ENCODE measurements at regions of chr16 and their contacts with region 1.

Region 1: DNA sequence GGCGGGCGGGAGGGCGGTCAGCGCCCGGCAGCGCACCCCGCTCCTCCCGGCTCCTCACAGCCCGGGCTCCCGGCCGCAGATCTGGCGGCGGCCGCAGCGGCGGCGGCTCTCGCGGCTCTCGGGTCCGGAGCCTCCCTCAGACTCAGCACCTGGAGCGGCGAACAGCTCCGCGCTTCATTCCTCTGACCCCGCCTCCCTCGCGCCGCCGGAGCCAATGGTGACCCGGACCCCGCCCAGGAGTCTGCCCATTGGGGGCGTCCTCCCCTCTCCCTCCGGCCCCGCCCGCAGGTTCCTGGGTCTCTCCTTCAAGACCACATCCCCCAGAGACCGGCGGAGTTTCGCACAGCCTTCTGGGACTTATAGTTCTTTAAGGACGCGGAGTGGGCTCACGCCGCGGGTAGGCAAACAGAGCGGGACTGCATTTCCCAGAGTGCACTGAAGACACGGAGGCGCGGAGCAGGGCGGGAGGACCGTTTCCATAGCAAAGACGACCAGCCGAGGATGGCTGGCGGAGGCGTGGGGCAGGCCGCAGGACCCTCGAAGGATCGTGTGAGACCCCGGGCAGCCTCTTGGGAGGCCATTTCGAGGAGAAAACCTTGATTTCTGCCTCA is at the start of gene SMPD3:
- DNase-seq: peak; percentile 86 to 93
- H3K4me3 ChIP-seq: peak within 1 kb of the TSS; percentile 47; the same call in 1 of the 2 replicates
- H3K27ac ChIP-seq: no peak within 1 kb of the TSS
- H3K4me1 ChIP-seq: peaks cover 30% of the 10 kb centered on the region
- H3K27me3 ChIP-seq: no peaks in the 10 kb centered on the region
- CTCF ChIP-seq: no peak
- total RNA-seq, gene SMPD3: 0.30 and 0.94 TPM in 2 replicates

Region 2: DNA sequence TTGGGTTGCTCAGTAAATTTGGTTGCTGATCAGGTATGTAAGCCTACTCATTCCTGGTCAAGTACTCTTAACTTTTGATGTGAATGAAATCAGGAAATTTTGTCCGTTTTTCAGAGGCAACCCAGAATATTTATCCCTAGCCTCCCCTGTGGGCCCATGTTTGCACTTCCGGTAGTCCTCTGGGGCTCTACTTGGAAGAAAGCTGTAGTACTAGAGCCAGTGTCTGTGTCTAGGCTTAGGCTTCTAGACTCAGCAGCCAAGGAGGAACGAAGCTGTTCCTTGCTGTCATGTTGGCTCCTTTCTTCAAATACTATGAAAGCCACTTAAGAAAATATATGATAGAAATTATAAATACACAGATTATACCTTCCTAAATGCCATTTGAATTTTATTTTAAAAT is 233.7 kb before region 1 on chr16:
- CTCF ChIA-PET with region 1: no interaction called
- POLR2A ChIA-PET with region 1: no interaction called
- intact Hi-C with region 1: no loop called
- DNase-seq: no peak
- H3K4me3 ChIP-seq: no peak overlapping the region
- H3K27ac ChIP-seq: no peak overlapping the region
- H3K4me1 ChIP-seq: no peaks in the 10 kb centered on the region
- H3K27me3 ChIP-seq: no peaks in the 10 kb centered on the region
- CTCF ChIP-seq: no peak

Region 3: DNA sequence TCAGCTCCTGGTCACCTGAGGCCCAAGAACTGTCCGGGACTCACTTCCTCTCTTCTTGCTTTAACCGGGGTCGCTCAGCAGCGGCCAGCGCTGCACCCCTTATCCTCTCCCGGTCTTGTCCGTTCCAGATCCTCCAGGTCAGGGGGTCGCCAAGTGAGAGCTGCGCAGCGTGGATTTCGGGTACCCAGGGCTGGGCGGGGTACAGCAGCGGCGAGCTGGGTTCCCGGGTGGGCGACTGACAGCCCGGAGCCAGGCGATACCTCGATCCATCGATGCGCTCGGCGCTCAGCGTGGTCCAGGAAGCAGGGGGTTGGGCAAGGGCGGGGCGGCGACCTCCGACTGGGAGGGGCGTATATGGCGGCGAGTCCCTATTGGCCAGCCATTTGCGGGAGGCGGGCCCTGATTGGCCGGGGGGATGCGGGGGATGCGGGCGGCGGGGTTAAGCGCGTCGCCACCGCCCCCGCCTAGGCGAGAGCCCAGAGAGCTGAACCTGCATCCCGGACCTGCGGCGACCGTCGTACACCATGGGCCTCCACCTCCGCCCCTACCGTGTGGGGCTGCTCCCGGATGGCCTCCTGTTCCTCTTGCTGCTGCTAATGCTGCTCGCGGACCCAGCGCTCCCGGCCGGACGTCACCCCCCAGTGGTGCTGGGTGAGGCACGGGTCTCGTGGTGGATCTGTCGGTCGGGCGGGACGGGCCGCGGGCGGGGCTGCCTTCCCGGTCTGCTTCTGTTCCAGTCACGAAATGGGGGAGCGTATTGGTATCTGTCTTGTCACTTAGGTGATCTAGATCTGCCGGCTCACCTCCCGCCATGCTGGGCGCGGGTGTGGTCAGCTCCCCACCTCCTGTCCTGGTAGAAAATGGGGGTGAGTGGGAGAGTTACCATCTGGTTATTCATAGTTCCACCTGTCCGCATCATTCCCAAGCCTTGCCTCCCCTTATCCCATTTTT is 203.3 kb before region 1 on chr16 and contains the start of gene PLA2G15:
- CTCF ChIA-PET with region 1: no interaction called
- POLR2A ChIA-PET with region 1: interaction called, 12 read pairs
- intact Hi-C with region 1: no loop called
- DNase-seq: peak; percentile 70 to 92
- H3K4me3 ChIP-seq: peak within 1 kb of the TSS; percentile 91
- H3K27ac ChIP-seq: no peak within 1 kb of the TSS
- H3K4me1 ChIP-seq: peaks cover 16% of the 10 kb centered on the region
- H3K27me3 ChIP-seq: no peaks in the 10 kb centered on the region
- CTCF ChIP-seq: no peak
- total RNA-seq, gene PLA2G15: 13.4 and 14.0 TPM in 2 replicates

Region 4: GRCh38 chr16:68396481-68396880 is 52.0 kb before region 1 on chr16:
- CTCF ChIA-PET with region 1: interaction called, 4 read pairs
- POLR2A ChIA-PET with region 1: no interaction called
- intact Hi-C with region 1: loop called (anchors 2 kb)
- DNase-seq: peak in 1 of 2 experiments; percentile 43
- H3K4me3 ChIP-seq: no peak overlapping the region
- H3K27ac ChIP-seq: no peak overlapping the region
- H3K4me1 ChIP-seq: no peaks in the 10 kb centered on the region
- H3K27me3 ChIP-seq: no peaks in the 10 kb centered on the region
- CTCF ChIP-seq: peak; percentile 66

Region 5: DNA sequence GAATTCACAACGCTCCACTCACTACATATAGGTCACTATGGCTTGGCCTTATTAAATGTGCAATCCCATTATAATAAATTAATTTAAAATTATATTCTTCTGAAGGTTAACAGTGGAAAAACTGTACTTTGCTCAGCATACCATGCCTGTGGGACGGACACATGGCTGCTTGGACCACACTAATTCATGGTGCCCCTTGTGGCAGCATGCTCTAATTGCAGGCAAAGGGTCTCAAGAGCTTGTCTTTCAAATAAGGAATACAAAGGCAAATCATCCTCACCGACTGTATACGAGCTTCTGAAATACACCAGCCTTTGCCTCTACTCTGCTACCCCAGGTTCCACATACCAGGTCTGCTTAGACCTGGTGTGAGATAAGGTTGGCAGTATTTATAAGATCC is 11.9 kb before region 1 on chr16:
- CTCF ChIA-PET with region 1: no interaction called
- POLR2A ChIA-PET with region 1: no interaction called
- intact Hi-C with region 1: no loop called
- DNase-seq: no peak
- H3K4me3 ChIP-seq: no peak overlapping the region
- H3K27ac ChIP-seq: no peak overlapping the region
- H3K4me1 ChIP-seq: peaks cover 8% of the 10 kb centered on the region; the same call in 1 of the 2 replicates
- H3K27me3 ChIP-seq: 0 out of 2 replicates have a peak, but pooled peaks cover 19% of the 10 kb centered on the region
- CTCF ChIP-seq: 0 out of 2 replicates have a peak, but pooled peaks have one; percentile 35

Region 6: DNA sequence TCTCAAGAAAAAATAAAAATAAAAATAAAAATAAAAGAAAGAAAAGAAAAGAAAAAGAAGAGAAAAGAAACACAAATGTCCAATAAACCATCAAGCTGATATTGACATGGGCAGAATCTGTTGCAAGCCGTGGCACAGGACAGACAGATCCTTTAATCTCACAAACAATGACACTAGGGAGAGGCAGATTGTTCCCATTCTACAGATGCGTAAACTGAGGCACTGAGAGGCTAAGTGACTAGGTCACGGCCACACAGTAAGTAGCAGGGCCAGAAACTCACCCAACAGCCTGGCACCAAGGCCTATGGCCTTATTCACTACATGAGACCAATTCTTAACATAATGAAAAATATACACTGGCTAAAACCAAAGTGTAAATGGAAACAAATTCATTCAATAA is 62.3 kb after region 1 on chr16:
- CTCF ChIA-PET with region 1: no interaction called
- POLR2A ChIA-PET with region 1: no interaction called
- intact Hi-C with region 1: loop called (anchors 1 kb)
- DNase-seq: no peak
- H3K4me3 ChIP-seq: no peak overlapping the region
- H3K27ac ChIP-seq: no peak overlapping the region
- H3K4me1 ChIP-seq: no peaks in the 10 kb centered on the region
- H3K27me3 ChIP-seq: no peaks in the 10 kb centered on the region
- CTCF ChIP-seq: no peak